ENCODE measurements at regions of chr11 and their contacts with region 1.

Region 1: DNA sequence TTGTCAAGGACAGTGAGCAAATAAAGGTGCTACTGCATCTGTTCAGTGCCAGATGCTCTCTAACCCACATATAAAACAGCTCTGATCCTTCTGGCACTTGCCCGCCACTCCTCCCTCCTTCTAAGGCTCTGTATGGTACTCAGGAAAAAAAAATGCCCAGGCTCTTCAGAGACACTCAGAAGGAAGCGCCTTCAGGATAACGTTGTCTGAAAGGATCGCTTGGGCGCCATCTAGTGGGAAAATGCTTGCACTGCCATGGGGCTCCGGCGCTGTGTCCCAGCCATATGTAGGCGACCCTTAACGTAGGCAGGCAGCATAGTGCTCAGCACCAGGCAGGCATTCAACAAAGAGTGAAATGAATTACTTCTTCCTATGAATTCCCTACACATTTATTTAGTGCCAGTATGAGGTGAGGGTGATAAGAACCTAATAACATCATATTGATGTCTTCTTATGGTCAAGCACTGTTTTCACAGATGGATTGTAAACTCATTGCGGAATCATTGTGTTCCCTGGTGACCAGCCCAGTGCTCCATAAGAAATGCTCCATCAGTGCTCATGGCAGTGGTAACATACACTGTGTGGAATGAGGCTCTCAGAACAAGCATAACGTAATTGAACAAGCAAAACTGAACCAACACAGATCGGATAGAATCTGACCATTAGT is 39.6 kb downstream of the PAMR1 start:
- DNase-seq: peak; percentile 42
- H3K4me3 ChIP-seq: no peak overlapping the region
- H3K27ac ChIP-seq: no peak overlapping the region
- H3K27me3 ChIP-seq: no peaks in the 10 kb centered on the region
- CTCF ChIP-seq: peak; percentile 90

Region 2: GRCh38 chr11:35182317-35182939 is 303.4 kb before region 1 on chr11:
- CTCF ChIA-PET with region 1: no interaction called
- POLR2A ChIA-PET with region 1: no interaction called
- DNase-seq: no peak
- H3K4me3 ChIP-seq: no peak overlapping the region
- H3K27ac ChIP-seq: peak overlapping the region; percentile 43
- H3K27me3 ChIP-seq: no peaks in the 10 kb centered on the region
- CTCF ChIP-seq: no peak

Region 3: DNA sequence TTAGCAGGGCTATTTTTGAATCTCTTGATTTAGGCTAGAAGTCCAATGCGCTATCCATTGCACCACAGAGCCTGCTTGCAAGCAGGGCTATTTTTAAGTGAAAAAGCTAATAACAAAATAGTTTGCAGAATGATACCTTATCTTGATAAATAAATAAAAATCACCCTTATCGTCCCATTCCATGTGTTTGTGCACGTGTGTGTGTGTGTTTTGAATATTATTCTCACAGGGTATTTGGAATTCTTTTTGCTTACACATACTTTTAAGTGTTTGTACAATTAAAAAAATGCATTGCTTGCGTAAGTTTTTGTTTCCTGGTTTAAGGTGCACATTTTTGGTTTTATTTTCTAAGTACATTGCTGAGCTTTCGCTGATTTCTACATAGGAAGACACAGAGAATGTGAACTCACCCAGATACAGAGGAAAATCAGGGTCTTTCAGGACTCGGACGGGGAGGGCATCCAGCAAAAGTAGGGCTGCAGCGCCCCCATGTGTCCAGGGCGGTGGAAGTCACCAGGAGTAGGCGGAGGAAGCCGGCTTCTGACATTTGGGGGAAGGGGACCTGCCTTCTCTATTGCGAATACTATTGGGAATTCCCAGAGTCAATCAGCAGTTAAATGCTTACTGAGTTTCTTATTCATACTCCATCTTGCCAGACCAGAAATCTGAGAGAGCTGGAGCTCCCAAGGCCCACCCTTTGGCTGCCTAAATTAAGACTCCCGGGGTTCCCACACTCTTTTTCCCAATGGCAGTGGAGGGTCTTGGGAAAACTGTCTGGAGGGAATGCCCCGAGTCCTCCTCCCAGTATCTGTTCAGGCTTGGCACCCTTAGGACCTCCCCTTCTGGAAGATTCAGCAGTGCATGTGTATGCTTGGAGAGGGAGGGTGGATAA is 93.6 kb before region 1 on chr11:
- CTCF ChIA-PET with region 1: no interaction called
- POLR2A ChIA-PET with region 1: no interaction called
- DNase-seq: peak; percentile 72
- H3K4me3 ChIP-seq: no peak overlapping the region
- H3K27ac ChIP-seq: peak overlapping the region; percentile 43
- H3K27me3 ChIP-seq: no peaks in the 10 kb centered on the region
- CTCF ChIP-seq: peak; percentile 86

Region 4: GRCh38 chr11:35496416-35496815 is 10.6 kb after region 1 on chr11:
- CTCF ChIA-PET with region 1: interaction called, 20 read pairs
- POLR2A ChIA-PET with region 1: no interaction called
- DNase-seq: no peak
- H3K4me3 ChIP-seq: no peak overlapping the region
- H3K27ac ChIP-seq: no peak overlapping the region
- H3K27me3 ChIP-seq: no peaks in the 10 kb centered on the region
- CTCF ChIP-seq: no peak

Region 5: DNA sequence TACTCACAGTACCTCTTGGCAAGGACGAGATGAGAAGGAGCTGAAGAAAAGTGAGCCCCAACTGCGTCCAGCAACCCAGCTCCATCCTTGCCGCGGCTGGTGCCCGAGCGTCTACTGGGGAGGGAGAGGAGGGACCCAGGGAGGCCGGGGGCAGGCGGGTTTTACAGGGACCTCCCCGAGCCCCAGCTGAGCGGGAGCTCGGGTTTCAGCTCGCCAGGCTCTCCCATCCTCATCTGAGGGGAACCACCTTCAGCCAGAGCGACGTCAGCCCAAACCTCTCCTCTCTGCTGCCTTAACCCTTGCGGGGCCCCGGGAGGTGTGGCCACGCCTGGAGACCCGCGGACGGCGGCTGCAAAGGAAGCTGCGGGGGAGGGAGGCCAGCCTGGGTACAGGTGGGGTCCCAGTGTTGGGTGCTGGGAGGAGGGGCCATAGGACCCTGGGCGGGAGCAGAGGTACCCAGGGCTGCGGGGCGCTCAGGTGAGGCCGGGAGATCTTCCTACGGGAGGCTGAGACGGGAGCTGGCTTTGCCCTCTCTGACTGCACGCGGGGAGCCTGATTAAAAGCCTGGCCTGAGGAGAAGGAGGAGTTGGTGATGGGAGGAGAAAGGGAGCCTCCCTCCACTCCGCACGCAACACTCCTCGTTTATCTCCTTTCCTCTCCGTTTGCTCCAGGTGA is 39.8 kb after region 1 on chr11 and contains the start of gene PAMR1:
- CTCF ChIA-PET with region 1: interaction called, 26 read pairs
- POLR2A ChIA-PET with region 1: interaction called, 14 read pairs
- DNase-seq: peak; percentile 65
- H3K4me3 ChIP-seq: peak within 1 kb of the TSS; percentile 75
- H3K27ac ChIP-seq: peak within 1 kb of the TSS; percentile 72
- H3K27me3 ChIP-seq: no peaks in the 10 kb centered on the region
- CTCF ChIP-seq: no peak
- polyA plus RNA-seq, gene PAMR1: 215 and 247 TPM in 2 replicates

Region 6: DNA sequence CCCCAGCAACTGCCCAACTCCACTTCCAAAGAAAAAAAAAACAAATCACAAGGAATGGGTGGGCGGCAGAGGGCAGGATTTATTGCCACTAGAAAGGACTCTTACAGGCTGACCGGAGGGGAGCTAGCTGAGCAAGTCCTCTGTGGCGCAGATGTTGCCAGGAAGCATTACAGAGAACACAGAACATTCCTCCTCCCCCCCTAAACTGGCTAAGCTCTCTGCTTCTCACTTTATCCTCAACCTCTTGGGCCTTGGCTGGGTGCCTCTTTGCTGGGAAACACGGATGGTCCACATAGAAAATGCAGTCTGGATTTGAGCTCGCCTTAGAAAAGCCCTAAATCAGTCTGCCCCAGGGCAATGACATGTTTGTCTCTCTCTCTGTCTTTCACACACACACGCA is 119.9 kb after region 1 on chr11:
- CTCF ChIA-PET with region 1: interaction called, 12 read pairs
- POLR2A ChIA-PET with region 1: interaction called, 3 read pairs
- DNase-seq: no peak
- H3K4me3 ChIP-seq: no peak overlapping the region
- H3K27ac ChIP-seq: no peak overlapping the region
- H3K27me3 ChIP-seq: peaks cover 10% of the 10 kb centered on the region
- CTCF ChIP-seq: no peak

Region 7: DNA sequence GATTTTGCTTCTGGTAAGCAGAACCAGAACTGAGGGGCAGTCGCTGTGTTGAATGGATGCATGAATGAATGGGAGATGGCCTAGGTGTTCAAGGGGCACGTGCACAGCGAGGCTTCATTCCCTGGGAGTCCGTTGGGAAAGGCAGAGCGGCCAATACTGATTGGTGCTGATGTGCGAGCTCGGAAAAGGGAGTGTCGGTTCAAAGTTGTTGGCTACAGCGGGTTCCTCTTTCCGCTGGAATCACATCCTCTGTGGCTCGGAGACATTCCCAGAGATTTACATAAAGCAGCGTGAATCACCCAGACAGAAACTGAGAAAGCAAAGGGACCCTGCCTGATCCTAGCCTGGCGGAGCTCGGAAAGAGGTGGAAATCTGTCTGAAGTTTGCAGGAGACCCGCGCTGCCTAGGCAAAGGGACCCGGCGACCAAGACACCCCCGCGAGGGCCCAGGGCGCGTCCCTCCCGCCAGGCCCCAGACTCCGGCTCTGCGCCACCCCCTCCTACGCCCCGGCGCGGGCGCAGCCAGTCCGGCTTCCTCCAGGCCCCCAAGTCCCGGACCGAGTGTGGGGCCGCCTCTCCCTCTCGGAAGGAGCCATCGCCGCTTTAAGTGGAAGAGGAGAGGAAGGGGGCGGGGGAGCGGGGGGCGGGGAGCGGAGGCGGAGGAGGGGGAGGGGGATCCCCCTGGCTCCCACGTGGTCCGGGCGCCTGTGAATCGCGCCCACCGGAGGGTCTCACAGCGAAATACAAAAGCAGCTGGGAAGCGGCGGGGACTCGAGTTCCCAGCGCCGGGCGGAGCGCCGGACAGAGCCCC is 132.1 kb after region 1 on chr11 and contains the start of gene FJX1:
- CTCF ChIA-PET with region 1: interaction called, 25 read pairs
- POLR2A ChIA-PET with region 1: no interaction called
- DNase-seq: peak; percentile 72
- H3K4me3 ChIP-seq: peak within 1 kb of the TSS; percentile 78
- H3K27ac ChIP-seq: peak within 1 kb of the TSS; percentile 80
- H3K27me3 ChIP-seq: no peaks in the 10 kb centered on the region
- CTCF ChIP-seq: no peak
- polyA plus RNA-seq, gene FJX1: 4.8 and 5.6 TPM in 2 replicates

Region 8: DNA sequence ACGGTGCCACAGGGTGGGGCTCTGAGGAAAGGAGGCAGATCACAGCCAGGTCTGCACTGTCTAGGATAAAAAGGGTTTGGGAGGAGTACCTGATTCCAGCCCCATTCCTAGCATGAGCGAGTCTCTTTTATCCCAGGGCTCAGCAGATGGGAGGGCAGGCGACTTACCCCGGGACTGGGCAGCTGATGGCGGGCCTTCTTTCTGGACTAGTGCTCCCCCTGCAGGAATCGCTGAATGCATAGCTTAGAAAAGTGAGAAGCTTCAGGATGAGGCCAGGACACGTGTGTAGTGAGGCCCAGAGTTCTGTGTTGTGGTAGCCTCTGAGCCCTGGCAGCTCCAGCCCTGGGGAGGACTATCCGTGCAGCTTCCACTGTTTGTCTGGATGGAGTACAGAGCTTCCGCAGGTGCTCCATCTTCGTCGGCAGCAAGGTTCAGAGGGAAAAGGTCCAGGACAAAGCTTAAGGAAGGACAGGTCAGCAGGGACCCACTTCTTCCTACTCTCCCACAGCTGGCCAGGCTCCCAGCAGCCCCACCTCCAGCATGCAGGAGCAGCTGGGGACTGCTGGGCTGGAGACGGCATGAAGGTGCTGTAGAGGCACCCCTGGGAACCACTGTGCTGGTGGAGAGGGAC is 773.1 kb after region 1 on chr11:
- CTCF ChIA-PET with region 1: interaction called, 12 read pairs
- POLR2A ChIA-PET with region 1: no interaction called
- DNase-seq: peak; percentile 45
- H3K4me3 ChIP-seq: no peak overlapping the region
- H3K27ac ChIP-seq: no peak overlapping the region
- H3K27me3 ChIP-seq: peaks cover 14% of the 10 kb centered on the region
- CTCF ChIP-seq: peak; percentile 81

Region 9: DNA sequence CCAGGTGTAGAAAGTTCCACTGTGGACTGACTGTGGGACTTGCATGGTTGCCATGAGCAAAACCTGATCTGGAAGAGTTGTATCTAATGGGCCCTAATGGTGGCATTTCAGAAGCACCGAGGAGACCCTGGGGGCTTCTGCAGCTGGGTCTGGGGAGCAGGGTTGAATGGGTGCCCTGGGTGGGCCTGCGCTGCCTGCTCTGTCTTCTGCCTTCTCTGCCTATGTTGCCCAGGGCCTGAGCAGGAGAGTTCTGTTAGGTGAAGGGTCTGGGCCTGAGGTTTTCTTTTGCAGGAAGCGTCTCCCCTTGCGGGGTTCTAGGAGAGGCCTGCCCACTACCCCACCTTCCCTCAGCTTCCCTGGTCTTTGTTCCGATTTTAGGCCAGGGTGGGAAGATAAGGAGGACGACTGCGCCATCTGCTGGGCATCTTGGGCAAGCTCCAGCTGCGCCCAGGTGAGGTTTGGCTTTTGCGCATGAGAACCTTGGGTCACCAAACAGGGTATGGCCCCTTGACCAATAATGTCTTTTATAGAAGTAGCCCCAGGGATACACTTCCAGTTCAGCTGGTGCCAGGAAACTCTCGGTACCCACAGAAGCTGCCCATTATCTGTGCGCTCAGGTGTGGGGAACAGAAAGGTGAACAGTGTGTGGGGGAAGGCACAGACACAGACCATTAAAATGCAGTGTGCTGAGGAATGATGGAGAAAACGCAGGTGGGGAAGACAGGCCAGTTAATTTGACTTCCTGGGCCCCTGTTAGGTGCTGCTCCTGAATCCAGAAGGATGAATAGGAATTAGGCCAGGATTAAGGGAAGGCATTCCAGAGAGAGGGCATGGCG is 780.2 kb after region 1 on chr11:
- CTCF ChIA-PET with region 1: interaction called, 24 read pairs
- POLR2A ChIA-PET with region 1: no interaction called
- DNase-seq: no peak
- H3K4me3 ChIP-seq: no peak overlapping the region
- H3K27ac ChIP-seq: no peak overlapping the region
- H3K27me3 ChIP-seq: peaks cover 8% of the 10 kb centered on the region
- CTCF ChIP-seq: peak; percentile 89